ENCODE measurements at regions of chr17 and their contacts with region 1.

Region 1: DNA sequence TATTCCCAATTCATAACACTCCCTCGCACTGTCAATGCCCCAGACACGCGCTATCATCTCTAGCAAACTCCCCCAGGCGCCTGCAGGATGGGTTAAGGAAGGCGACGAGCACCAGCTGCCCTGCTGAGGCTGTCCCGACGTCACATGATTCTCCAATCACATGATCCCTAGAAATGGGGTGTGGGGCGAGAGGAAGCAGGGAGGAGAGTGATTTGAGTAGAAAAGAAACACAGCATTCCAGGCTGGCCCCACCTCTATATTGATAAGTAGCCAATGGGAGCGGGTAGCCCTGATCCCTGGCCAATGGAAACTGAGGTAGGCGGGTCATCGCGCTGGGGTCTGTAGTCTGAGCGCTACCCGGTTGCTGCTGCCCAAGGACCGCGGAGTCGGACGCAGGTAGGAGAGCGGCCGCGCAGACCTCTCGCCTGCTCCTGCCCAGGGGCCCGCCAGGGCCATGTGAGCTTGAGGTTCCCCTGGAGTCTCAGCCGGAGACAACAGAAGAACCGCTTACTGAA is at the start of gene GRN:
- DNase-seq: peak; percentile 92
- ATAC-seq: peak; percentile 99
- H3K4me3 Mint-ChIP-seq: peak within 1 kb of the TSS; percentile 82
- H3K27ac Mint-ChIP-seq: peak within 1 kb of the TSS; percentile 9
- H3K4me1 Mint-ChIP-seq: peaks cover 31% of the 10 kb centered on the region
- H3K27me3 Mint-ChIP-seq: peaks cover 11% of the 10 kb centered on the region
- total RNA-seq, gene GRN: 56.5 to 69.2 TPM

Region 2: GRCh38 chr17:44218344-44219107 is 126.5 kb before region 1 on chr17:
- CTCF ChIA-PET with region 1: interaction called, 19 read pairs
- DNase-seq: peak; percentile 90
- ATAC-seq: peak; percentile 63
- H3K4me3 Mint-ChIP-seq: peak overlapping the region; percentile 88
- H3K27ac Mint-ChIP-seq: peak overlapping the region; percentile 91
- H3K4me1 Mint-ChIP-seq: peaks cover 37% of the 10 kb centered on the region
- H3K27me3 Mint-ChIP-seq: no peaks in the 10 kb centered on the region

Region 3: GRCh38 chr17:44293509-44294226 is 51.3 kb before region 1 on chr17:
- CTCF ChIA-PET with region 1: no interaction called
- DNase-seq: no peak
- ATAC-seq: no peak
- H3K4me3 Mint-ChIP-seq: no peak overlapping the region
- H3K27ac Mint-ChIP-seq: no peak overlapping the region
- H3K4me1 Mint-ChIP-seq: peaks cover 4% of the 10 kb centered on the region
- H3K27me3 Mint-ChIP-seq: peaks cover 15% of the 10 kb centered on the region

Region 4: GRCh38 chr17:44363613-44364159 is 18.7 kb after region 1 on chr17 and contains the start of gene FAM171A2:
- CTCF ChIA-PET with region 1: interaction called, 45 read pairs
- DNase-seq: peak; percentile 68
- ATAC-seq: peak; percentile 95
- H3K4me3 Mint-ChIP-seq: peak within 1 kb of the TSS; percentile 56
- H3K27ac Mint-ChIP-seq: no peak within 1 kb of the TSS
- H3K4me1 Mint-ChIP-seq: no peaks in the 10 kb centered on the region
- H3K27me3 Mint-ChIP-seq: peaks cover 51% of the 10 kb centered on the region
- total RNA-seq, gene FAM171A2: 0.26 TPM in 1 of 2 experiments, not detected in the other

Region 5: GRCh38 chr17:44417553-44417952 is 72.6 kb after region 1 on chr17:
- CTCF ChIA-PET with region 1: no interaction called
- DNase-seq: no peak
- ATAC-seq: peak; percentile 27
- H3K4me3 Mint-ChIP-seq: no peak overlapping the region
- H3K27ac Mint-ChIP-seq: no peak overlapping the region
- H3K4me1 Mint-ChIP-seq: peaks cover 16% of the 10 kb centered on the region
- H3K27me3 Mint-ChIP-seq: no peaks in the 10 kb centered on the region

Measured in activated CD8-positive, alpha-beta memory T cell treated with anti-CD3 and anti-CD28 coated beads, Interleukin-2, amount 10 ng/mL, durations not matched to agents 7 days and 5 days (primary cell).